ENCODE measurements at regions of chr3 and their contacts with region 1.

Region 1: GRCh38 chr3:132253262-132253878 is 63.8 kb upstream of the ACP3 start:
- DNase-seq: no peak
- H3K4me3 ChIP-seq: no peak overlapping the region
- H3K27ac ChIP-seq: no peak overlapping the region
- H3K4me1 ChIP-seq: no peaks in the 10 kb centered on the region
- H3K27me3 ChIP-seq: no peaks in the 10 kb centered on the region
- CTCF ChIP-seq: peak; percentile 29 to 61 (median 58)
- POLR2A ChIP-seq: no peak

Region 2: GRCh38 chr3:132090921-132091320 is 162.4 kb before region 1 on chr3:
- intact Hi-C with region 1: no loop called
- DNase-seq: no peak
- H3K4me3 ChIP-seq: no peak overlapping the region
- H3K27ac ChIP-seq: no peak overlapping the region
- H3K4me1 ChIP-seq: no peaks in the 10 kb centered on the region
- H3K27me3 ChIP-seq: no peaks in the 10 kb centered on the region
- CTCF ChIP-seq: no peak
- POLR2A ChIP-seq: no peak

Region 3: GRCh38 chr3:132325103-132325606 is 71.8 kb after region 1 on chr3:
- intact Hi-C with region 1: no loop called
- DNase-seq: peak; percentile 28
- H3K4me3 ChIP-seq: no peak overlapping the region
- H3K27ac ChIP-seq: no peak overlapping the region
- H3K4me1 ChIP-seq: peaks cover 6% of the 10 kb centered on the region
- H3K27me3 ChIP-seq: no peaks in the 10 kb centered on the region
- CTCF ChIP-seq: no peak
- POLR2A ChIP-seq: no peak

Region 4: GRCh38 chr3:132346841-132347736 is 93.7 kb after region 1 on chr3:
- intact Hi-C with region 1: loop called (anchors 5 kb)
- DNase-seq: no peak
- H3K4me3 ChIP-seq: no peak overlapping the region
- H3K27ac ChIP-seq: no peak overlapping the region
- H3K4me1 ChIP-seq: peaks cover 3% of the 10 kb centered on the region
- H3K27me3 ChIP-seq: no peaks in the 10 kb centered on the region
- CTCF ChIP-seq: no peak
- POLR2A ChIP-seq: no peak

Measured in testis (tissue), 5 donors.